ENCODE measurements at regions of chr11 and their contacts with region 1.

Region 1: DNA sequence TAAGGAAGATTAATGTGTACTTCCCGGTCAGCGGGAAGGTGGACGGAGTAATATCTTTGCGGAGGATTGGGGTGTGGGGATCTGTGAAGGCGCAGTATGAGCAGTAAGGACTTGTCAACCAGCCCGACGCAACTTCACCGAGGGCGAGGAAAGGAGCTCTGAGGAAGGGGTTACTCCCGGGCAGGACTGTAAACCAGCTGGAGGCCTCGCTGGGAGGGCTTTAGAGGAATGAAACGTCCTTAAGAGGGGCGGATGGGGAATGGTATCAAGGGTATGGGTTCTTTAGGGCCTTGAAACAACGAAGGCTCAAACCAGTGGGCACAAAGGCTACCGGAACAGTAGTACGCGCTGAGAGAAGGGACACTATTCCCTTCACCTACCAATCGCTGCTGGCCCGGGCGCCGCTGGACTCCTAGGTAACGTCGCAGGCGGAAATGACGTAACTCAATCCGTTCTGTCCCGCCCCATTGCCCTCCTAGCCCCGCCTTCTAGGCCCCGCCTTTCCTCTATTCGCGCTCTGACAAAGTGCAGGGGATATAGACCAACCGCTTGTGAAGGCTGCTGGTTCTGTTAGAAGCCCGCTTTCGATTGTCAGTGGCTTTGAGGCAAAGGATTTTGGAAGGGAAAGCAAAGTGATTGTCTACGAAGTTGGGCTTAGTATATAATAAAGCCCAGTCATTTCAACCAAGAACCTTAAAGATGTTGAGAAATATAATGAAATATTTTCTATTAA is at the start of gene C11orf65:
- DNase-seq: peak; percentile 99
- H3K4me3 Mint-ChIP-seq: peak within 1 kb of the TSS; percentile 100
- H3K27ac Mint-ChIP-seq: peak within 1 kb of the TSS; percentile 100
- H3K4me1 Mint-ChIP-seq: peaks cover 13% of the 10 kb centered on the region
- H3K27me3 Mint-ChIP-seq: no peaks in the 10 kb centered on the region
- total RNA-seq, gene C11orf65: 0.30 and 0.40 TPM in 2 replicates

Region 2: GRCh38 chr11:108121274-108122155 is 345.7 kb before region 1 on chr11 and contains the start of gene ACAT1:
- intact Hi-C with region 1: loop called (anchors 2 kb)
- DNase-seq: peak; percentile 99
- H3K4me3 Mint-ChIP-seq: peak within 1 kb of the TSS; percentile 87
- H3K27ac Mint-ChIP-seq: peak within 1 kb of the TSS; percentile 84
- H3K4me1 Mint-ChIP-seq: peaks cover 33% of the 10 kb centered on the region
- H3K27me3 Mint-ChIP-seq: no peaks in the 10 kb centered on the region
- total RNA-seq, gene ACAT1: 65.0 and 65.9 TPM in 2 replicates

Region 3: GRCh38 chr11:108497317-108498045 is 30.2 kb after region 1 on chr11:
- intact Hi-C with region 1: loop called (anchors 1 kb)
- DNase-seq: peak; percentile 91
- H3K4me3 Mint-ChIP-seq: peak overlapping the region; percentile 89
- H3K27ac Mint-ChIP-seq: peak overlapping the region; percentile 97
- H3K4me1 Mint-ChIP-seq: peaks cover 22% of the 10 kb centered on the region
- H3K27me3 Mint-ChIP-seq: no peaks in the 10 kb centered on the region

Region 4: DNA sequence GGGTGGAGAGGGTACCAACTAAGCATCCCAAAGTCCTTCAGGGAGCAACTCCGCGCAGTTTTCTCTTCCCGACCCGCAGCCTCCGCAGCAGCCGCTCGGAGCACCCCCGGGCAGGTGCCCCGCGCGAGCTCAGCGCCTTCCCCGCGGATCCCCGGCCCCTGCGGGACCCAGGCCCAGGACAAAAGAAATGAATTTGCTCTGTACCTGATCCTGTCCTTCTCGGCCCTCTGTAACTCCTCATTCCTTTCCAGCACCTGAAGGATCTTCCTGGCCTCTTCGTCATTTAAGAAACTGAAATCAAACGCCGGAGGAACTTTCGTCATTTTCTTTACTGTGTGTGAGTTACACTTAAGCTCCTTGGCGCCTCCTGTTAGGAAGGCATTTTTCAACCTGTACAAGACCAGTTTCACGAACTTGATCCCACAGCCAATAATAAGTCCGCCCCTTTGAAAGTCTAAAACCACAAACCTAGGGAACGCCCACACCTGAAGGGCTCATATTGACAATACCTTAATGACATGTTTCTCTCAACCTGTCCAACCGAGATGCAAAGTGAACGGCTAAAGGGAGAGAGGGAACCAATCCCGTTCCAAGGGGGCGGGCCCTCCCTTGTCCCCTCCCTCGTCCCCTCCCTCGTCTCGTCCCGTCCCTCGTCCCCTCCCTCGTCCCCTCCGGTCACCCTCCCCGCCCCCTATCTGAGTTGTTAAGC is 126.1 kb after region 1 on chr11 and contains the start of gene EXPH5:
- intact Hi-C with region 1: loop called (anchors 1 kb)
- DNase-seq: peak; percentile 95
- H3K4me3 Mint-ChIP-seq: peak within 1 kb of the TSS; percentile 91
- H3K27ac Mint-ChIP-seq: peak within 1 kb of the TSS; percentile 85
- H3K4me1 Mint-ChIP-seq: peaks cover 16% of the 10 kb centered on the region
- H3K27me3 Mint-ChIP-seq: peaks cover 49% of the 10 kb centered on the region
- total RNA-seq, gene EXPH5: 0.90 and 0.91 TPM in 2 replicates

Region 5: DNA sequence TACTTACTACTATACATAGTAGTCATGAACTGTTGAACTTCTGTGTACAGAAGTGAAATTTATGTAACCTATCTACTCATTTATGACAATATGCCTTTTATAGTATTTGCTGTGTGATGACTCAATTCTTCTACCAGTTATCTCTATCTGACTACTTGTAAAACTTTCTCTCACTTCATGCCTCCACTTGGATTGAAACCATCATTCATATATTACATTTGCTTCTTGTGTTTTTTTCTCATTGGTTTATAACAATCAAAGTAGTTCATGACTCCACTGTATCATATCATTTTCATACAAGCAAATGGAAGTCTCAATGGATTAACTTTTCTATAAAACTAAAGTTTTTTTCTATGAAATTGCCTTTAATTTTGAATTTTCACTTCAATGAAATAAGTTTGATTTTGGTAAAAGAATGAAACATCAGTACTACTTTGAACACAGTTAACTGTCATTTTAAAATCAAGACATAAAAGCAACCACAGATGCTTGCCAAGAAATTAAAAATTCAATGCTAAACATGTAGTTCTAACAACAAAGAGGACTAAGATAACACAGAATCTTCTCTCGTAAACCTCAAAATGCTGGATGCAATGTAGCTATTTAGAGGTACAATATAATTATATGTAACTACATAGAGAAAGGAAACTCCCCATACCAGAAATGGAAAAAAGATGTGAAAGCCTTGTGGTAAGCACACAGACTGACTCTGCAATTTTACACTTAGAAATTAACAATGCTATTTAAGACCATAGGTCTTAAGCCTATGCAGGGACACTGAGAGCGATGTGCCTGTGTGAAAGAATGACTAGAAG is 153.9 kb after region 1 on chr11:
- intact Hi-C with region 1: loop called (anchors 1 kb)
- DNase-seq: no peak
- H3K4me3 Mint-ChIP-seq: no peak overlapping the region
- H3K27ac Mint-ChIP-seq: peak overlapping the region; percentile 3
- H3K4me1 Mint-ChIP-seq: peaks cover 17% of the 10 kb centered on the region
- H3K27me3 Mint-ChIP-seq: peaks cover 17% of the 10 kb centered on the region

Region 6: GRCh38 chr11:108647701-108648527 is 180.7 kb after region 1 on chr11:
- intact Hi-C with region 1: loop called (anchors 1 kb)
- DNase-seq: peak; percentile 89
- H3K4me3 Mint-ChIP-seq: no peak overlapping the region
- H3K27ac Mint-ChIP-seq: no peak overlapping the region
- H3K4me1 Mint-ChIP-seq: no peaks in the 10 kb centered on the region
- H3K27me3 Mint-ChIP-seq: peaks cover 12% of the 10 kb centered on the region

Measured in activated CD4-positive, alpha-beta T cell treated with anti-CD3 and anti-CD28 coated beads, Interleukin-2, amount 10 ng/mL, durations not matched to agents 24 days and 14 days (primary cell).